Calu3 (cell line): ENCODE measurements at regions of chr9 and their contacts with region 1.

Region 1: DNA sequence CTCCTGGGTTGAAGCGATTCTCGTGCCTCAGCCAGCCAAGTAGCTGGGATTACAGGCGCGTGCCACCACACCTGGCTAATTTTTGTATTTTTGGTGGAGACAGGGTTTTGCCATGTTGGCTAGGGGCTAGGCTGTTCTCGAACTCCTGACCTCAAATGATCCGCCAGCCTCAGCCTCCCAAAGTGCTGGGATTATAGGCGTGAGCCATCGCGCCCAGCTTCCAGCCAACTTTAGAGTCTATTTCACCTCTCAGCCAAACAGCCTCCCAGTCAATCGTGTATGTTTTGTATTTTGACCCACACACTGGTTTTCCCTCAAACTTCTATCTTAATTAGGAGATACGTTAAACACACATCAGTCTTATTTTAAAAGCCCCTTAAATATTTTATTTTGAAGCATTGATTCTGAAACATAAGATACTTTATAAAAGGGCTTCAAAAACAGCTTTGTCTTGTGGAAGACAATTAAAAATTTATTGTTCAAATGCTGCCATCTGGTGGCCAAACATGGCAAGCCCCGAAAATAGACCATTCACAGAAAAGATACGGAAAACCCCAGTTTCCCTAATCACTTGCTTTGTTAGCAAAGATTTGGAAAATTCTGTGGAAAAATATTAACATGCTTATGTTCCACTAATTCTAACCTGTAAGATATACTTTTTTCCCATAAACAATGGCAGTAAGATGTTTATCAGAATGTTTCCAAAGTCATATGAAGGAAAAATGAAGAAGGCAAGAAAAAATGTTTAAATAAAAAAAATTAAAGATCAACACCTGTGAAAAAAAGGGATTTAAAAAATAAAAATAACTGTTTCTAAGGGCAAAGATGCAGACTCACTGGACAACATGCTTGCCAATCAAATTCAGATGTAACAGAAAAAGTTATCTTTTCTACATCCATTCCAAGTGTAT is 33.1 kb downstream of the APTX start:
- DNase-seq: peak; percentile 27
- H3K4me3 Mint-ChIP-seq: no peak overlapping the region
- H3K27ac Mint-ChIP-seq: no peak overlapping the region
- H3K4me1 Mint-ChIP-seq: no peaks in the 10 kb centered on the region
- H3K27me3 Mint-ChIP-seq: no peaks in the 10 kb centered on the region
- CTCF ChIP-seq: peak; percentile 18

Region 2: GRCh38 chr9:32579706-32580331 is 388.5 kb before region 1 on chr9:
- CTCF ChIA-PET with region 1: interaction called, 12 read pairs
- intact Hi-C with region 1: loop called (anchors 1 kb)
- DNase-seq: peak; percentile 69
- H3K4me3 Mint-ChIP-seq: no peak overlapping the region
- H3K27ac Mint-ChIP-seq: no peak overlapping the region
- H3K4me1 Mint-ChIP-seq: peaks cover 26% of the 10 kb centered on the region
- H3K27me3 Mint-ChIP-seq: no peaks in the 10 kb centered on the region
- CTCF ChIP-seq: peak; percentile 16

Region 3: GRCh38 chr9:32589083-32589723 is 379.2 kb before region 1 on chr9:
- CTCF ChIA-PET with region 1: interaction called, 13 read pairs
- intact Hi-C with region 1: loop called (anchors 1 kb)
- DNase-seq: no peak
- H3K4me3 Mint-ChIP-seq: no peak overlapping the region
- H3K27ac Mint-ChIP-seq: no peak overlapping the region
- H3K4me1 Mint-ChIP-seq: peaks cover 18% of the 10 kb centered on the region
- H3K27me3 Mint-ChIP-seq: no peaks in the 10 kb centered on the region
- CTCF ChIP-seq: no peak

Region 4: DNA sequence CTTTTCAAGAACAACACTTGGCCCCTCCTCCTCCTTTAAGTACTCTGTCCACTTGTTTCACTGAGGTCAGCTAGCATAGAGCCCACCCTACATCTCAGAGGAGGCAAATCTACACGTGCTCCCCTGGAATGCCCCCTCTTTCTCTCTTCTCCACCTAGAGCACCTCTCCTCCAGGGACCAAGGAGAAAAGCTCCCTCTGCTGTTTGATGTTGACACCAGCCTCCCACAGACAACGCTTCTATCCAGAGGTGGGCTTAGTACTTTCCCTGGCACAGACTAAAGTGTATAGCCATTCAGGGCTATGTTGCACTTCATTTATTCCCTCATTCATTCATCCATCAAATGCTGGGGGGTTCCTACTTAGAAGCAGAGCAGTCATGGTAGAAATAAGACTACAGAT is 264.7 kb before region 1 on chr9:
- CTCF ChIA-PET with region 1: no interaction called
- intact Hi-C with region 1: loop called (anchors 5 kb)
- DNase-seq: no peak
- H3K4me3 Mint-ChIP-seq: no peak overlapping the region
- H3K27ac Mint-ChIP-seq: no peak overlapping the region
- H3K4me1 Mint-ChIP-seq: peaks cover 20% of the 10 kb centered on the region
- H3K27me3 Mint-ChIP-seq: peaks cover 10% of the 10 kb centered on the region
- CTCF ChIP-seq: no peak

Region 5: GRCh38 chr9:33065157-33066076 is 97.1 kb after region 1 on chr9:
- CTCF ChIA-PET with region 1: no interaction called
- intact Hi-C with region 1: no loop called
- DNase-seq: no peak
- H3K4me3 Mint-ChIP-seq: no peak overlapping the region
- H3K27ac Mint-ChIP-seq: no peak overlapping the region
- H3K4me1 Mint-ChIP-seq: no peaks in the 10 kb centered on the region
- H3K27me3 Mint-ChIP-seq: no peaks in the 10 kb centered on the region
- CTCF ChIP-seq: no peak

Region 6: GRCh38 chr9:33623658-33624586 is 655.6 kb after region 1 on chr9:
- CTCF ChIA-PET with region 1: no interaction called
- intact Hi-C with region 1: no loop called
- DNase-seq: peak; percentile 68
- H3K4me3 Mint-ChIP-seq: peak overlapping the region; percentile 18
- H3K27ac Mint-ChIP-seq: no peak overlapping the region
- H3K4me1 Mint-ChIP-seq: no peaks in the 10 kb centered on the region
- H3K27me3 Mint-ChIP-seq: peaks cover 24% of the 10 kb centered on the region
- CTCF ChIP-seq: peak; percentile 59